ENCODE measurements at regions of chr3 and their contacts with region 1.

Region 1: DNA sequence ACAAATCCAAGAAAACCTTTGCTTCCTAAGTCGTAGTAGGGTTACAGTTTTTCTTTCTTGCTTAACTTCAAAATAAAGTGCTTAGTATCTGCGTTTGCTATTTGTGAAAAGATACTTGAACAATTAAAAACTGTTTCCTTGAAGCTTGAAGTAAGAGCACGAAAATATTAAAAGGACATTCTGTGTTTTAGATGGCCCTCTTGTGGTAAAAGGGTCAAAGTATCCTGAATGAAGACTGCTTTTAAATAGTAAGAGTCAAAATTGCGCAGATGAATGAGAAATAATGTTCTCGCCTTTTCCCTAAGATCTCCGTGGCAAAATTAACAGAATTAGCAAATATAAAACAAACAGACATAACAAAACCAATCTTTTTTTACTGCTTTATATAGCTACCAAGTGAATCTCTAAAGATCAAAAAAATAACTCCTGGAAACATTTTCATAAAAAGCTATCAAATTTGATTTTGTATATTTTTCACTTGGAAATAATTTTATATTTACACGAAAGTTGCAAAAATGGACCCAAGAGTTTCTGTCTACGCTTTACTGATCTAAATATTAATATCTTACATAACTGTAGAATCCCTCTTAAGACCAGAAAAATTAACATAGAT is 175.4 kb downstream of the MBNL1 start:
- H3K4me3 ChIP-seq: no peak overlapping the region
- H3K27ac ChIP-seq: no peak overlapping the region
- H3K4me1 ChIP-seq: no peaks in the 10 kb centered on the region
- CTCF ChIP-seq: 0 out of 2 replicates have a peak, but pooled peaks have one; percentile 14

Region 2: DNA sequence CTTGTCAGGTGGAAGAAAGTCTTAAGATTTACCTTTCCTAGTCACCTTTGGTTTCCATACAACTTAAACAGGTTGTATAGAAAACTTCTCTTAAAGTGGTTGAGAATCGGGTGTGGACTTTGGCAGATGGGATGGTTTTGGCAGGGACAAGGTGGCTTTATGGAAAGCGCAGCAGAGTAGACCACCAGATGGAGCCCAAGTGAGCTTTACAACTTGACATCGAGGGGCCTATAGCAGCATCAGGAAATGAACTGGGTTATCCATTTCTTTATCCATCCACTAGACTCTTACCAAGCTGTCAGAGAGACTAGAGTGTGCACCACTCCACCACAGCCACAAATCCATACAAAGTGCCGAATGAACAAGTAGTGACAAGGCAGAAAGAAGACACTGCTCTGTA is 260.7 kb before region 1 on chr3:
- CTCF ChIA-PET with region 1: interaction called, 13 read pairs
- POLR2A ChIA-PET with region 1: no interaction called
- H3K4me3 ChIP-seq: no peak overlapping the region
- H3K27ac ChIP-seq: no peak overlapping the region
- H3K4me1 ChIP-seq: no peaks in the 10 kb centered on the region
- CTCF ChIP-seq: 0 out of 2 replicates have a peak, but pooled peaks have one; percentile 21